Adrenal gland (tissue), 19 donors: ENCODE measurements at regions of chr11 and their contacts with region 1.

Region 1: GRCh38 chr11:13354335-13354734 is 76.7 kb downstream of the BMAL1 start:
- DNase-seq: no peak
- H3K4me3 ChIP-seq: no peak overlapping the region
- H3K27ac ChIP-seq: no peak overlapping the region
- H3K4me1 ChIP-seq: no peaks in the 10 kb centered on the region
- H3K27me3 ChIP-seq: no peaks in the 10 kb centered on the region
- CTCF ChIP-seq: no peak
- POLR2A ChIP-seq: no peak

Region 2: DNA sequence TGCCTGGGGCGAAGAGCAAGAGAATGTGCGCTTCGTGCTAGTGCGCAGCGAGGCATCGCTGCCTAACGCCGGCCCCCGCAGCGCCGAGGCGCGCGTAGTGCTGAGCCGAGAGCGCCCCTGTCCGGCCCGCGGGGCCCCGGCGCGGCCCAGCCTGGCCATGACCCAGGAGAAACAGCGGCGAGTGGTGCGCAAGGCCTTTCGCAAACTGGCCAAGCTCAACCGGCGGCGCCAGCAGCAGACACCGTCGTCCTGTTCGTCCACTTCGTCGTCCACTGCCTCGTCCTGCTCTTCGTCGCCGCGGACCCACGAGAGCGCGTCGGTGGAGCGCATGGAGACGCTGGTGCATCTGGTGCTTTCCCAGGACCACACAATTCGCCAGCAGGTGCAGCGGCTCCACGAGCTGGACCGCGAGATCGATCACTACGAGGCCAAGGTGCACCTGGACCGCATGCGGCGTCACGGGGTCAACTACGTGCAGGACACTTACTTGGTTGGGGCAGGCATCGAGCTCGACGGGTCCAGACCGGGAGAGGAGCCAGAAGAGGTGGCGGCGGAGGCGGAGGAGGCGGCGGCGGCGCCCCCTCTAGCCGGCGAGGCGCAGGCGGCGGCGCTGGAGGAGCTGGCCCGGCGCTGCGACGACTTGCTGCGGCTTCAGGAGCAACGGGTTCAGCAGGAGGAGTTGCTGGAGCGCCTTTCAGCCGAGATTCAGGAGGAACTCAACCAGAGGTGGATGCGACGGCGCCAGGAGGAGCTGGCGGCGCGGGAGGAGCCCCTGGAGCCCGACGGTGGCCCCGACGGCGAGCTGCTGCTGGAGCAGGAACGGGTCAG is 344.2 kb before region 1 on chr11:
- intact Hi-C with region 1: no loop called
- DNase-seq: no peak
- H3K4me3 ChIP-seq: no peak overlapping the region
- H3K27ac ChIP-seq: no peak overlapping the region
- H3K4me1 ChIP-seq: peaks cover 4 to 21% of the 10 kb centered on the region in 2 donors
- H3K27me3 ChIP-seq: peaks cover 79% of the 10 kb centered on the region
- CTCF ChIP-seq: no peak
- POLR2A ChIP-seq: no peak

Region 3: DNA sequence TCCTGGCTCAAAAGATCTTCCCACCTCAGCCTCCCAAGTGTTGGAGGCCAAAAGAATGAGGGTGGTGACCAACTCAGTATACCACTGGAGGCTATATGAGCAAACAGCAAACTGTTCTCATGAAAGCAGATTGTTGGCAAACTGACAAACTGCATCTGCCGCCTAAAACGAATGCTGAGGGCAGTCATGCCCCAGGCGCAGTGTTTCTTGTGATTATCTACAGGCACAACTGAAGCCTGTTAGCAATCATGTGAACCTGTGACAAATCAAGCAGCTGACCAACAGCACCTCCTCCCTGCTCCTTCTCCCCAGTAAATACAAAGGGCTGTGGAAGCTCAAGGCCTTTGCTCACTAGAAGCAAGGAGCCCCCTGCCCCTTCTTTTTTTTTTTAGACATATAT is 60.9 kb after region 1 on chr11:
- intact Hi-C with region 1: no loop called
- DNase-seq: peak in 1 of 7 donors; percentile 60
- H3K4me3 ChIP-seq: no peak overlapping the region
- H3K27ac ChIP-seq: no peak overlapping the region
- H3K4me1 ChIP-seq: no peaks in the 10 kb centered on the region
- H3K27me3 ChIP-seq: no peaks in the 10 kb centered on the region
- CTCF ChIP-seq: no peak
- POLR2A ChIP-seq: no peak

Region 4: GRCh38 chr11:13462901-13463778 is 108.8 kb after region 1 on chr11 and contains the start of gene BTBD10:
- intact Hi-C with region 1: loop called in 1 of 2 experiments (anchors 10 kb)
- DNase-seq: peak; percentile 92 to 96 (median 95)
- H3K4me3 ChIP-seq: peak within 1 kb of the TSS; percentile 2 to 86 (median 73)
- H3K27ac ChIP-seq: peak within 1 kb of the TSS; percentile 68 to 95 (median 78)
- H3K4me1 ChIP-seq: peaks cover 8 to 21% of the 10 kb centered on the region in 2 donors
- H3K27me3 ChIP-seq: no peaks in the 10 kb centered on the region
- CTCF ChIP-seq: no peak
- POLR2A ChIP-seq: peak; percentile 74 to 83
- total RNA-seq, gene BTBD10: 16.6 to 39.8 (median 21.9) TPM